ENCODE measurements at regions of chr1 and their contacts with region 1.

Region 1: GRCh38 chr1:153842006-153842471 is 66.8 kb downstream of the SLC27A3 start:
- DNase-seq: peak; percentile 43
- CTCF ChIP-seq: no peak

Region 2: DNA sequence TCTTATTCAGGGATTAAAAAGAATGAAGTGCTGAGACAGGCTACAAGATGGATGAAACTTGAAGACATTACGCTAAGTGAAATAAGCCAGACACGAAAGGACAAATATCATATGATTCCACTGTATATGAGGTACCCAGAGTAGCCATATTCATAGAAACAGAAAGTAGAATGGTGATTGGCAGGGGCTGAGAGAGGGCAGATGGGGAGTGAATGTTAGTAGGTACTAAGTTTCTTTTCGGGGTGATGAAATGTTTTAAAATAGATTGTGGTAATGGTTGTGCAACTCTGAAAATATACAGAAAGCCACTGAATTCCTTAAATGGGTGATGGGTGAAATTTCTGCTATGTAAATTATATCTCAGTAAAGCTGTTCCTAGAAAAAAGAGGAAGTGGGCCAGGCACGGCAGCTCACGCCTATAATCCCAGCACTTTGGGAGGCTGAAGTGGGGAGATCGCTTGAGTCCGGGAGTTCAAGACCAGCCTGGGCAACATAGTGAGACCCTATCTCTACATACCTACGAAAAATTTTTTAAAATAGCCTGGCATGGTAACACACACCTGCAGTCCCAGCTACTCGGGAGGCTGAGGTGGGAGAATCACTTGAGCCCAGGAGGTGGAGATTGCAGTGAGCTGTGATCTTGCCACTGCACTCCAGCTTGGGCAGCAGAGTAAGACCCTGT is 50.9 kb before region 1 on chr1:
- CTCF ChIA-PET with region 1: no interaction called
- POLR2A ChIA-PET with region 1: no interaction called
- DNase-seq: peak; percentile 85
- CTCF ChIP-seq: no peak

Region 3: DNA sequence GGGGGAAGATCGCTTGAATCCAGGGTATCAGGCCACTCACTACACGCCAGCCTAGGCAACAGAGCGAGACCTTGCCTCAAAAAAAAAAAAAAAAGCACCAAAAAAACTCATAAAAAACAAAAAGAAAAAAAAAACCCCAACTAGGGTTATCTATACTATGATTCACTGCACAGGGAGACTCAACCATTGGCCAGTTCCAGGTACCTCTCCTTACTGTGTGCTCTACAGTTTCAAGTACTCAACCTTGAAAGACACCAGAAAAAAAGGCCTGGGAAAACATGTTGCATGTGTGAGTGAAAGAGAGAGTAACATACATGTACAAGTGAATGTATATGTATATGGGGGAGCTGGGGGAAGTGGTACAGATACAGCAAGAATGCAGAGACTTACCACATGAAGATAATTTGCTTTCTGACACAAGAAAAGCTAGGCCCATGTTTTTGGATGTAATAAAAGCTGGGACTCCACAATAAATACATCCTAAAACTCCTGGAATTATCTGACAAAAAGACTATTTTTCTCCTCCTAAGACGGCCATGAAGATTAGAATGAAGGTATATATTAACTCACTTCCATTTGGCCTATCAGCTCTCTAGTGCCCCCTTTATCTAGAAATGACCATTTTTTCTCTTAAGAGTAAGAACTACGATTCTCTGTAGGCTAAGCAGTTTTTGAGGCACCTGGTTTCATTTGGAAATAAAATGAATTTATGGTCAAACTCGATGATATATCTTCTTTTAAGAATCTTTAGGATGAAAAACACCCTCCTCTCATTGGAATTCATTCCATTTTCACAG is 14.7 kb before region 1 on chr1:
- CTCF ChIA-PET with region 1: interaction called, 23 read pairs
- POLR2A ChIA-PET with region 1: no interaction called
- DNase-seq: no peak
- CTCF ChIP-seq: no peak

Region 4: DNA sequence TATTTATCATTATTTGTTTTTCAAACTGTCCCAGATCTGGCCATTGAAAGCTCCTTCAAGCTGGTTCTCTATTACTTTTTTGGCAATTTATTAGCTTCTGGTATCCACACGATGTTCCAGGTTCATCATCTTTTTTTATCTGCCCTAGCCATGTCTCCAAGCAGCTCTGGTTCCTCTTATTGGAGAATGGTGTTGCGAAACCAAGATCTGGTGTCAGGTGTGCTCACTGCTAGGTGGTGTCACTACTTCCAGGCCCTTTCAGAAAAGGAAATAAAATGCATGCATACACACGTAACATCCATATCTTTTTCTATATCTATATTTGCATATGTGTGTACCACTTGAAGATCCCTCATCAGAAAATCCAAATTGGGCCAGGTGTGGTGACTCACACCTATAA is 27.4 kb after region 1 on chr1:
- CTCF ChIA-PET with region 1: no interaction called
- POLR2A ChIA-PET with region 1: no interaction called
- DNase-seq: no peak
- CTCF ChIP-seq: no peak

Measured in GM10248 (cell line).